ENCODE measurements at regions of chr9 and their contacts with region 1.

Region 1: GRCh38 chr9:77163884-77164283 is 13.4 kb upstream of the VPS13A start:
- DNase-seq: no peak
- ATAC-seq: no peak
- H3K4me3 ChIP-seq: no peak overlapping the region
- H3K4me3 Mint-ChIP-seq: no peak overlapping the region
- H3K27ac ChIP-seq: no peak overlapping the region
- H3K27ac Mint-ChIP-seq: no peak overlapping the region
- H3K4me1 ChIP-seq: no peaks in the 10 kb centered on the region
- H3K4me1 Mint-ChIP-seq: peaks cover 1% of the 10 kb centered on the region
- H3K27me3 ChIP-seq: peaks cover 0 to 3% of the 10 kb centered on the region in 2 experiments
- H3K27me3 Mint-ChIP-seq: peaks cover 8% of the 10 kb centered on the region
- CTCF ChIP-seq: no peak

Region 2: GRCh38 chr9:77177161-77177893 is 13.4 kb after region 1 on chr9 and contains the start of gene VPS13A:
- CTCF ChIA-PET with region 1: interaction called, 9 read pairs
- POLR2A ChIA-PET with region 1: interaction called, 3 read pairs
- intact Hi-C with region 1: loop called in 1 of 2 experiments (anchors 1 kb)
- DNase-seq: peak; percentile 74 to 96 (median 91)
- ATAC-seq: peak; percentile 81
- H3K4me3 ChIP-seq: peak within 1 kb of the TSS; percentile 74 to 92
- H3K4me3 Mint-ChIP-seq: peak within 1 kb of the TSS; percentile 92
- H3K27ac ChIP-seq: peak within 1 kb of the TSS; percentile 72 to 82
- H3K27ac Mint-ChIP-seq: peak within 1 kb of the TSS; percentile 93
- H3K4me1 ChIP-seq: peaks cover 11% of the 10 kb centered on the region
- H3K4me1 Mint-ChIP-seq: peaks cover 40% of the 10 kb centered on the region
- H3K27me3 ChIP-seq: no peaks in the 10 kb centered on the region
- H3K27me3 Mint-ChIP-seq: no peaks in the 10 kb centered on the region
- CTCF ChIP-seq: no peak
- total RNA-seq, gene VPS13A: 35.5 to 37.4 TPM

Region 3: DNA sequence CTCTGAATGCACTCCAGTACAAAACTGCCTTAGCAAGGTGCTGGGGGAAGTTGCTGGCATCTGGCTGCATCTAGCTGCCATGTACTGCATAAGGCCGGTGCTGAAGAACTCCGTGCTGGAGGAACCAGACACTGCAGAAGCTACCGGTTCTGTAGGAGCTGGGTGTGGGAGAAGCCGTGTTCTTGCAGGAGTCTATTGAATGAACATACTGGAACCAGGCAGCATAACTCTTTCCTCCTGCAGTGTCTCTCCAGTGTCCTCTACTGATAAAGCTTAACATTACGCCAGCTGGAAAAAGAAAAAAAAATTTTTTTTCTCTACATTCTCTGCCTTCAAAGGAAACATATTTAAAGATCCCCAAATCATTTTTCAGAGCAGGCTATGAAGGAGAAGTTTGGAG is 52.0 kb after region 1 on chr9:
- CTCF ChIA-PET with region 1: interaction called, 12 read pairs
- POLR2A ChIA-PET with region 1: no interaction called
- intact Hi-C with region 1: loop called (anchors 2 kb)
- DNase-seq: peak in 1 of 9 experiments; percentile 3
- ATAC-seq: no peak
- H3K4me3 ChIP-seq: no peak overlapping the region
- H3K4me3 Mint-ChIP-seq: no peak overlapping the region
- H3K27ac ChIP-seq: no peak overlapping the region
- H3K27ac Mint-ChIP-seq: no peak overlapping the region
- H3K4me1 ChIP-seq: no peaks in the 10 kb centered on the region
- H3K4me1 Mint-ChIP-seq: no peaks in the 10 kb centered on the region
- H3K27me3 ChIP-seq: no peaks in the 10 kb centered on the region
- H3K27me3 Mint-ChIP-seq: no peaks in the 10 kb centered on the region
- CTCF ChIP-seq: no peak

Region 4: DNA sequence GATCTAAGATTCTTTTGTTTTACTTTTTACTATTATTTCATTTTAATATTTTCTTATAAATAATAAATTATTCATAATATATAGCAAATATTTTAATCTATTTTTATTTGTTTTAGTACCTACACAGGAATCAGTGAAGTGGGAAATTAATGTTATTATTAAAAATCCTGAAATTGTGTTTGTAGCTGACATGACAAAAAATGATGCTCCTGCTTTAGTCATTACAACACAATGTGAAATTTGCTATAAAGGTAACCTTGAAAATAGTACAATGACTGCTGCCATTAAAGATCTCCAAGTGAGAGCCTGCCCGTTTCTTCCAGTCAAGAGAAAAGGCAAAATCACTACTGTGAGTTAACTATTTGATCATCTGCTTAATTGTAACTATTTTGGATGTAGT is 152.2 kb after region 1 on chr9:
- CTCF ChIA-PET with region 1: no interaction called
- POLR2A ChIA-PET with region 1: no interaction called
- intact Hi-C with region 1: loop called in 1 of 2 experiments (anchors 10 kb)
- DNase-seq: no peak
- ATAC-seq: no peak
- H3K4me3 ChIP-seq: no peak overlapping the region
- H3K4me3 Mint-ChIP-seq: no peak overlapping the region
- H3K27ac ChIP-seq: no peak overlapping the region
- H3K27ac Mint-ChIP-seq: no peak overlapping the region
- H3K4me1 ChIP-seq: no peaks in the 10 kb centered on the region
- H3K4me1 Mint-ChIP-seq: no peaks in the 10 kb centered on the region
- H3K27me3 ChIP-seq: no peaks in the 10 kb centered on the region
- H3K27me3 Mint-ChIP-seq: no peaks in the 10 kb centered on the region
- CTCF ChIP-seq: no peak

Measured in CD8-positive, alpha-beta T cell (primary cell).